HepG2 (cell line): ENCODE measurements at regions of chr20 and their contacts with region 1.

Region 1: DNA sequence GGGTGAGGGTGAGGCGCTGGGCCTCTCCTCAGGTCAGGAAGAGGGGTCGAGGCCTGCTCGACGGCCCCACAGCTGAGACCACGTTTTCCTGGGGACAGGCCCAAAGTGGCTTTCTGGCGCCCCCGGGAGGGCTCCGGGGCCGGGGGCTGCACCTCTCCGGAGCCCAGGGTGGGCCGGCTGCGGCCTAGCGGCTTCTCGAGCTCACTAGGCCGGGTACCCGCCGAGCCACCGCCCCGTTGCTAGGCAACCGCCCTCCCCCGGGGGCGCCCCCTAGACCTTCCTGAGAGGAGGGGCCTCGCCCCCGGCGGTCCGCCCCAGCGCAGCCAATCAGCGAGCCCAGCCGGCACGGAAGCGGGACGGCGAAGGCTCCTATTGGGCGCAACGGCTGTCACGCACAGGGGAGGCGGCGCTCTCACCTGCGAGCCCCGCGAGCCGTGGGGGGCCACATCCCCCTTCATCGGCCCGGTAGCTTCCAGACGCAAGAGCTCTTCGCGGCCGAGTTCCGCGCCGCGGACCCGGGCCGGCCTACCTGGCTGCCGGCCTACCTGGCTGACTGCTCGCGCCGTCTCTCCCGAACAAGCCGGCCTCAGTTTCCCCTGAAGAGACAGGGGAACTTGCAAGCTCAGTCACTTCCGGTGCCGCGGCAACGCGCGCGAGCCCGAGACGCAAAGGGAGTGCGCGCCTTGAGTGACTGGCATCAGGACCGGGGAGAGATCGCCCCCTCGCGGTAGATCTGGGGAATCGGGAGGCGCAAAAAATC is 831 bp upstream of the BCL2L1 start:
- DNase-seq: peak; percentile 99
- ATAC-seq: peak; percentile 81
- H3K4me3 ChIP-seq: peak overlapping the region; percentile 78 to 91 (median 87)
- H3K27ac ChIP-seq: peak overlapping the region; percentile 92
- H3K4me1 ChIP-seq: peaks cover 57% of the 10 kb centered on the region
- H3K27me3 ChIP-seq: no peaks in the 10 kb centered on the region; a peak in 1 of 5 replicates
- CTCF ChIP-seq: peak; percentile 99
- EP300 ChIP-seq: peak; percentile 17 to 54; a peak in 3 of 4 replicates
- POLR2A ChIP-seq: peak; percentile 75 to 77
- RAD21 ChIP-seq: peak; percentile 99

Region 2: GRCh38 chr20:31572701-31573554 is 150.6 kb before region 1 on chr20:
- CTCF ChIA-PET with region 1: interaction called, 3 read pairs
- POLR2A ChIA-PET with region 1: interaction called, 50 read pairs
- in situ Hi-C with region 1: loop called (anchors 10 kb)
- intact Hi-C with region 1: no loop called
- DNase-seq: peak; percentile 100
- ATAC-seq: peak; percentile 74
- H3K4me3 ChIP-seq: peak overlapping the region; percentile 70 to 88 (median 80)
- H3K27ac ChIP-seq: peak overlapping the region; percentile 86
- H3K4me1 ChIP-seq: peaks cover 68% of the 10 kb centered on the region
- H3K27me3 ChIP-seq: no peaks in the 10 kb centered on the region; a peak in 1 of 5 replicates
- CTCF ChIP-seq: no peak; the same call in 1 of the 2 replicates
- EP300 ChIP-seq: peak; percentile 89 to 96; a peak in 3 of 4 replicates
- POLR2A ChIP-seq: peak; percentile 80 to 89
- RAD21 ChIP-seq: peak; percentile 97

Region 3: GRCh38 chr20:31630187-31630790 is 93.2 kb before region 1 on chr20:
- CTCF ChIA-PET with region 1: interaction called, 35 read pairs
- POLR2A ChIA-PET with region 1: interaction called, 90 read pairs
- in situ Hi-C with region 1: loop called (anchors 5 kb)
- intact Hi-C with region 1: loop called (anchors 1 kb)
- DNase-seq: no peak
- ATAC-seq: no peak
- H3K4me3 ChIP-seq: no peak overlapping the region
- H3K27ac ChIP-seq: no peak overlapping the region
- H3K4me1 ChIP-seq: peaks cover 17% of the 10 kb centered on the region
- H3K27me3 ChIP-seq: no peaks in the 10 kb centered on the region; a peak in 2 of 5 replicates
- CTCF ChIP-seq: no peak
- EP300 ChIP-seq: no peak
- POLR2A ChIP-seq: no peak
- RAD21 ChIP-seq: no peak

Region 4: GRCh38 chr20:31674895-31675827 is 48.3 kb before region 1 on chr20:
- CTCF ChIA-PET with region 1: interaction called, 13 read pairs
- POLR2A ChIA-PET with region 1: interaction called, 643 read pairs
- in situ Hi-C with region 1: no loop called
- intact Hi-C with region 1: loop called (anchors 1 kb)
- DNase-seq: no peak
- ATAC-seq: no peak
- H3K4me3 ChIP-seq: no peak overlapping the region
- H3K27ac ChIP-seq: peak overlapping the region; percentile 0
- H3K4me1 ChIP-seq: peaks cover 81% of the 10 kb centered on the region
- H3K27me3 ChIP-seq: no peaks in the 10 kb centered on the region
- CTCF ChIP-seq: no peak
- EP300 ChIP-seq: no peak
- POLR2A ChIP-seq: no peak; a peak in 1 of 4 replicates
- RAD21 ChIP-seq: no peak

Region 5: GRCh38 chr20:31704225-31705119 is 19.0 kb before region 1 on chr20:
- CTCF ChIA-PET with region 1: interaction called, 4 read pairs
- POLR2A ChIA-PET with region 1: interaction called, 2,822 read pairs
- in situ Hi-C with region 1: no loop called
- intact Hi-C with region 1: loop called (anchors 1 kb)
- DNase-seq: peak; percentile 100
- ATAC-seq: peak; percentile 88
- H3K4me3 ChIP-seq: peak overlapping the region in 1 of 3 experiments; percentile 38; a peak in 1 of 6 replicates
- H3K27ac ChIP-seq: peak overlapping the region; percentile 87
- H3K4me1 ChIP-seq: peaks cover 99% of the 10 kb centered on the region
- H3K27me3 ChIP-seq: no peaks in the 10 kb centered on the region
- CTCF ChIP-seq: no peak
- EP300 ChIP-seq: peak; percentile 99 to 100
- POLR2A ChIP-seq: peak; percentile 56 to 73; a peak in 3 of 4 replicates
- RAD21 ChIP-seq: peak; percentile 43

Region 6: GRCh38 chr20:31738729-31739561 is 15.4 kb after region 1 on chr20 and contains the start of gene TPX2:
- CTCF ChIA-PET with region 1: no interaction called
- POLR2A ChIA-PET with region 1: interaction called, 34 read pairs
- in situ Hi-C with region 1: no loop called
- intact Hi-C with region 1: no loop called
- DNase-seq: peak; percentile 99
- ATAC-seq: peak; percentile 99
- H3K4me3 ChIP-seq: peak within 1 kb of the TSS; percentile 90 to 97 (median 93)
- H3K27ac ChIP-seq: peak within 1 kb of the TSS; percentile 84
- H3K4me1 ChIP-seq: peaks cover 34% of the 10 kb centered on the region
- H3K27me3 ChIP-seq: peaks cover 0 to 3% of the 10 kb centered on the region in 2 experiments; a peak in 2 of 5 replicates
- CTCF ChIP-seq: peak; percentile 68
- EP300 ChIP-seq: no peak; a peak in 1 of 4 replicates
- POLR2A ChIP-seq: peak; percentile 87 to 95
- RAD21 ChIP-seq: peak; percentile 76
- total RNA-seq, gene TPX2: 124 and 190 TPM in 2 replicates

Region 7: DNA sequence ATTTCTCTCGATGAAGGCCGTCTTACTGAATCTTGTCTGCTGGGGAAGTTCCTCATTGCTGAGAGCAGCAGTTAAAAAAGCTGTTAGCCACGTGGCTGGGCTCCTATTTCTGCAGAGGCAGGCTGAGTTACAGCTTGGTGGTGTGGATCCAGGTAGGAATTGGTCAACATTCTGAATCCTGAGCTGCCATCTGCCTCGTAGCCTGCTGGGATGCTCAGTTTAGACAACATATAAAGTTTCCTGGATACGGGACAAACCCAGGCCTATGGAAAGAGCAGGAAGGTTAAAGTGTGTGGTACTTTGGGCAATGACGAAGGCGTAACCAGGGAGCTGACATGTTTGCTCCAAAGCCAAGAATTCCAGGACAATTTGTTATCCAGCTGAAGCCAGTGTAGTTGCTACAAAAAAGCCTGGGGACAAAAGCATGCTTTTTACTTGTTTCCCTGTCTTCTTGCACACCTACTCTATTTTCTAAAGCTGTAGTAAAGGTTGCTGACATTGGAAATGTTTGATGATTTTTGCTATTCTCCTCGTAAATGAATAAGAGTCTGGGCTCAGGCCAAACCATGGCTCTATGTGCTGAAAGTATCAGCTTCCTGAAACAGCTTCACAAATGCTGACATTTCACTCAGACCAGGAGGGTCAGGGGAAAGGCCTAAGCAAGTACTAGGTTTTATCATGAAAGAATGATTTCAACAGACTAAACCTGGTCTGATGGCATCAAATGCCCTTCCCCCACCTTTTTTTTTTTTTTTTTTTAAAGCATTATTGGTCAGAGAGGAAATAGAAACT is 83.3 kb after region 1 on chr20:
- CTCF ChIA-PET with region 1: no interaction called
- POLR2A ChIA-PET with region 1: no interaction called
- in situ Hi-C with region 1: no loop called
- intact Hi-C with region 1: no loop called
- DNase-seq: no peak
- ATAC-seq: no peak
- H3K4me3 ChIP-seq: no peak overlapping the region
- H3K27ac ChIP-seq: no peak overlapping the region
- H3K4me1 ChIP-seq: no peaks in the 10 kb centered on the region
- H3K27me3 ChIP-seq: no peaks in the 10 kb centered on the region
- CTCF ChIP-seq: no peak
- EP300 ChIP-seq: no peak
- POLR2A ChIP-seq: no peak
- RAD21 ChIP-seq: no peak

Region 8: GRCh38 chr20:32830437-32830836 is 1106.9 kb after region 1 on chr20:
- CTCF ChIA-PET with region 1: no interaction called
- POLR2A ChIA-PET with region 1: no interaction called
- in situ Hi-C with region 1: no loop called
- intact Hi-C with region 1: loop called (anchors 5 kb)
- DNase-seq: no peak
- ATAC-seq: no peak
- H3K4me3 ChIP-seq: no peak overlapping the region
- H3K27ac ChIP-seq: no peak overlapping the region
- H3K4me1 ChIP-seq: no peaks in the 10 kb centered on the region
- H3K27me3 ChIP-seq: no peaks in the 10 kb centered on the region
- CTCF ChIP-seq: no peak
- EP300 ChIP-seq: no peak
- POLR2A ChIP-seq: no peak
- RAD21 ChIP-seq: no peak